HAP-1 (cell line): ENCODE measurements at regions of chr5 and their contacts with region 1.

Region 1: DNA sequence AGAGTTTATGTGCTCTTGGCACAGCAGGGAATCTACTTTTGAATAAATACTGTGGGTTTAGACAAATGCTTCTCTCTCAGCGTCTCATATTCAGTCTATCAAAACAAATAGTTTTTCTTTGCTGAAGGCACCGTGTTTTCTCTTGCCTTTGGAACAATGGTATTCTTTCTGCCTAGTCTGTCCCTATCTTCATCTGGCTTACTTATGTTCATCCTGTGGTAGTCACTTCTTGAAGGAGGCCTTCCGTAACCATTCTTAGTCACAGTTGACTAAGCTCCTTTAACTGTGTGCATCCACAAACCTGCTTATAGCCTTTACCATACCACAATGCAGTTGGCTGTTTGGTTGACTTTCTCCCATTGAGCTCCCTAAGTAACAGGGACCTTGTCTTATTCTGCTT is 45.9 kb downstream of the LARP1 start:
- DNase-seq: no peak
- H3K4me3 ChIP-seq: no peak overlapping the region
- H3K4me1 ChIP-seq: no peaks in the 10 kb centered on the region
- H3K27me3 ChIP-seq: no peaks in the 10 kb centered on the region

Region 2: DNA sequence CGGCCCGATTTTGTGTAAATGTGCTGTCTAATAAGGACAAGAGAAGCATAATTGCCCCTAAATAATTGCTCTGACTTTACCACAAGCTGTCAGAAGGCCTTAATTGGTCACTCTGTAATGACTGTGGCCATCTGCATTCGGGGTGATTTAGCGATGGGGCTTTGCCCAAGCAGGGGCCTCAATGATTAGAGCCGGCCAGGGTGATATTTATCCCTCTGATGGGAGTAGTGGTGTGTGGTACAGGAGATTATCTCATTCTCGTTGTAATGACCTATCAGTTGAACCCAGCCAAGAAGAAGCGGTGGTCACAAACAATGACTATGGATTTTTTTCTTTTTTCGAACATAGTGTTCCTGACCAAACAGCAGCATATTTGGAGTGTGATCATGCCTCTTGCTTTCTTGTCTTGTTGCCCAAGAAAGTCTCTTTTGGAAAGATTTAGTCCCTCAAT is 427.3 kb before region 1 on chr5:
- in situ Hi-C with region 1: no loop called
- DNase-seq: no peak
- H3K4me3 ChIP-seq: no peak overlapping the region
- H3K4me1 ChIP-seq: no peaks in the 10 kb centered on the region
- H3K27me3 ChIP-seq: no peaks in the 10 kb centered on the region

Region 3: GRCh38 chr5:154729613-154730012 is 71.5 kb before region 1 on chr5:
- in situ Hi-C with region 1: no loop called
- DNase-seq: peak; percentile 63 to 76
- H3K4me3 ChIP-seq: no peak overlapping the region
- H3K4me1 ChIP-seq: no peaks in the 10 kb centered on the region
- H3K27me3 ChIP-seq: no peaks in the 10 kb centered on the region

Region 4: DNA sequence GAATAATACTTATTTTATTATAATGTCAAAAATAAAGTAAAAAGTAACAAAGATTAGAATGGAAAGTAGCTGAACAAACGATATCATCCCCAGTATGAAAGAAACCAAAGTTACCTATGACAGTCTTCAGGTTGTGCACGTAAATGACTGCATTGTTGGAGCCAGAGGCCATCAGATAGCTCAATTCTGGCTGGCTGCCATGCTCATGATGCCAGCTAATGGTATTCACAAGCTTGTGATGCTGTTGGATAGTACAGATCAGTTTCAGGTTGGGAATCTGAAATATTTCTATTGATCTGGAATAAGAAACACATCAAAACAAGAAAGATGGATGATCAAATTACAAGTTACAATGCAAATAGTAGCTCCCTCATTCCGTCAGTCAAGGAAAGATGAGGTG is 115.8 kb after region 1 on chr5:
- in situ Hi-C with region 1: loop called (anchors 10 kb)
- DNase-seq: no peak
- H3K4me3 ChIP-seq: no peak overlapping the region
- H3K4me1 ChIP-seq: no peaks in the 10 kb centered on the region
- H3K27me3 ChIP-seq: no peaks in the 10 kb centered on the region